Prostate gland (tissue), 2 donors: ENCODE measurements at regions of chr15 and their contacts with region 1.

Region 1: GRCh38 chr15:75625542-75626347 is at the start of gene SNUPN:
- DNase-seq: peak; percentile 91
- H3K4me3 ChIP-seq: peak within 1 kb of the TSS; percentile 66 to 74
- H3K27ac ChIP-seq: peak within 1 kb of the TSS; percentile 90 to 91
- H3K4me1 ChIP-seq: peaks cover 3% of the 10 kb centered on the region
- H3K27me3 ChIP-seq: no peaks in the 10 kb centered on the region
- CTCF ChIP-seq: peak in 2 of 4 experiments; percentile 16 to 32
- POLR2A ChIP-seq: peak; percentile 16
- total RNA-seq, gene SNUPN: 17.7 to 21.6 TPM

Region 2: DNA sequence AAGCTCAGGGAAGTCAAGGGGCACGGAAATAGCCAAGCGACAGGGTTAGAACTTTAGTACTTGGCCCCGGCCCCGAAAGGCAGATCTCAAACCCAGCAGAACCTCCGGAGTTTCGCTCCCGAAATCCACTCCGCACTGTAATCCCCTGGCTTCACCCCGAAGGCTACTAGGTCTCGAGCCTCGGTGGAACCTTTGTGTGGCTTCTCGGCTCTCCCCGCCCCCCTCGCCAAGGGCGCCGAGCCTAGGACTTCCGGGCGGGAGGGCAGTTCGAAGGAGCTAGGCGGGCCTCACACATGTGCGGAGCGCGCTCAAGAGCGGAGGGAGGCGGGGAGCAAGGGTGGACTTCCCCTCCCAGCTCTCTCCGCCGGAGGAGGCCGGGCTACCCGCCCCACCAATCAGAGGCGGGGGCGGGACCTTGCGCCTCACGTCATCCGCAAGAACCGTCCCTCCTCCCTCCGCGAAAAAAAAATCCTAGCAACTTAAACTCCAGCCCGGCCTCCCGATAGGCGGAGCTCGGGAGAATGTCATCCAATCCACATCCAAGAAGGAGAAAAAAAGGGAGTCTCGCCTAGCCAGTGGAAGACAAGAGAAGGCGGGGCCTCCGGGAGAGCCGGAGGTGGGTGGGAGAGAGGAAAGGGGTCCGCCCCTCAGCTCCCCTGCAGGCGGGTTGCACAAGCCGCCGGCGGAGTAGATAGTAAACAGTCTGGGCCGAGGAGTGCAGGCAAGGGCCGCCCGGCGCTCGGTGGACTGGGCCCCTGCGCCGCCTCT is 171.9 kb before region 1 on chr15:
- intact Hi-C with region 1: loop called (anchors 2 kb)
- DNase-seq: peak; percentile 99
- H3K4me3 ChIP-seq: peak overlapping the region; percentile 72 to 96
- H3K27ac ChIP-seq: peak overlapping the region; percentile 98 to 100
- H3K4me1 ChIP-seq: peaks cover 16% of the 10 kb centered on the region
- H3K27me3 ChIP-seq: no peaks in the 10 kb centered on the region
- CTCF ChIP-seq: peak in 1 of 4 experiments; percentile 50
- POLR2A ChIP-seq: peak; percentile 87

Region 3: DNA sequence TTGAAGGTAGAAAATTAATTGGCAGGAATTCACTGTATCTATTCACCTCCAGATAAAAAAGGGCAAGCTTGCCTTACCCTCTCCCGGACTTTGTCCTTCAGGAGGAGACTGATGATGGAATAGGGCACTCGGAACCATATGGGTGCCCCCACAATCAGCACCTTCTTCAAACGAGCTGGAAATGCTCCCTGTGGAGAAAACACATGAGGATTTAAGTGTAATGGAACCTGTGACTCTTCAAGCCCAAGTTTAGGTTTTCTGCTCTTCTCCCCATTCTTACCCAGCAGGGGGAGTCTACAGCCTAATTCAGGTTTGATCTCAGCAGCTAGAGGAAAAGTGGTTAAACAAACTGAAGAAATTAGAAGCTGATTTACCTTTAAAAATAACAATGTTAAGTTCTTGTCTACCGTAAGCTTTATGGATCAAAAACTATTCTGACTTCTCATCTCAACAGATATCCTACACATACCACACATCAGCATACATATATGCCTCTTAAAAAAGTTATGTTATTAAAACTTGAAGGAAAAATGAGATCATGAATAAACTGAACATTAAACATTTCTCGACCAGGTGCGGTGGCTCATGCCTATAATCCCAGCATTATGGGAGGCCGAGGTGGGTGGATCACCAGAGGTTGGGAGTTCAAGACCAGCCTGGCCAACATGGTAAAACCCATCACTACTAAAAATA is 116.8 kb before region 1 on chr15:
- intact Hi-C with region 1: no loop called
- DNase-seq: no peak
- H3K4me3 ChIP-seq: no peak overlapping the region
- H3K27ac ChIP-seq: no peak overlapping the region
- H3K4me1 ChIP-seq: no peaks in the 10 kb centered on the region
- H3K27me3 ChIP-seq: no peaks in the 10 kb centered on the region
- CTCF ChIP-seq: peak in 3 of 4 experiments; percentile 46 to 53 (median 53)
- POLR2A ChIP-seq: no peak

Region 4: DNA sequence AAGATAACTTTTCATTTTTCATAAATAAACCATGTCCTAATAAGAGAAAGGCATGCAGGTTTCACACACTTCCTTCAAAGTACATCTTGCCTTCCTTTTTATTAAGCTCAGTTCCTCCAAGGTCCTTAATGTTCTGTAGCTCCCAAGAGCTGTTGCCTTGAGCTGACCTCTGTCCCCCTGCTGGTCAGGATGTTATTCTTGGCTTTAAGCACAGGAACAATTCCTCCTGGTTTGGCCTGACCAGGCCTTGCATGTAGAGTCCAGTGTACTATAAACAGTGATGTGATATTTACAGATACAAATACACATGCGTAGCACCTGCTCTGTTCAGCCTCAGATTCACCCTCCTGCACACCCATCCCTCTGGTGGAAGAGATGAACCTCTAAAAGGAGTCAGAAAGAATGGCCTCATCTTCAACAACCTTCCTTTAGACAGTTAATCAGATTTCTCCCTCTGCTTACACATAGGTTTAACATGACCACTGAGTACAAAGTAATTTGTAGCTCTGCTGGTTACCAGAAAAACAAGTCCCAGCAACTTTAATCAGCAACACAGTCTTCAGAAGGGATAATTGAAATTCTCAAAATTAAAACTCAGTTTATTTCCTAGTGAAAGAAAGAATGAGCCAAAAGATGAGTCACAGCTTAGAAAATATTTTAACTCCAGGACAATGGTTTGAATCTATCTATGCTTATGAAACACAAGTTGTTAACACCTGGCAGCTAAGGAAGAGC is 93.2 kb before region 1 on chr15:
- intact Hi-C with region 1: loop called (anchors 5 kb)
- DNase-seq: peak; percentile 21
- H3K4me3 ChIP-seq: no peak overlapping the region
- H3K27ac ChIP-seq: peak overlapping the region; percentile 69 to 79
- H3K4me1 ChIP-seq: peaks cover 20% of the 10 kb centered on the region
- H3K27me3 ChIP-seq: no peaks in the 10 kb centered on the region
- CTCF ChIP-seq: peak in 3 of 4 experiments; percentile 19 to 36 (median 22)
- POLR2A ChIP-seq: no peak

Region 5: GRCh38 chr15:75661091-75661777 is 35.5 kb after region 1 on chr15:
- intact Hi-C with region 1: no loop called
- DNase-seq: peak; percentile 91
- H3K4me3 ChIP-seq: no peak overlapping the region
- H3K27ac ChIP-seq: peak overlapping the region; percentile 74 to 79
- H3K4me1 ChIP-seq: peaks cover 11% of the 10 kb centered on the region
- H3K27me3 ChIP-seq: no peaks in the 10 kb centered on the region
- CTCF ChIP-seq: no peak
- POLR2A ChIP-seq: peak; percentile 57